ENCODE measurements at regions of chr11 and their contacts with region 1.

Region 1: DNA sequence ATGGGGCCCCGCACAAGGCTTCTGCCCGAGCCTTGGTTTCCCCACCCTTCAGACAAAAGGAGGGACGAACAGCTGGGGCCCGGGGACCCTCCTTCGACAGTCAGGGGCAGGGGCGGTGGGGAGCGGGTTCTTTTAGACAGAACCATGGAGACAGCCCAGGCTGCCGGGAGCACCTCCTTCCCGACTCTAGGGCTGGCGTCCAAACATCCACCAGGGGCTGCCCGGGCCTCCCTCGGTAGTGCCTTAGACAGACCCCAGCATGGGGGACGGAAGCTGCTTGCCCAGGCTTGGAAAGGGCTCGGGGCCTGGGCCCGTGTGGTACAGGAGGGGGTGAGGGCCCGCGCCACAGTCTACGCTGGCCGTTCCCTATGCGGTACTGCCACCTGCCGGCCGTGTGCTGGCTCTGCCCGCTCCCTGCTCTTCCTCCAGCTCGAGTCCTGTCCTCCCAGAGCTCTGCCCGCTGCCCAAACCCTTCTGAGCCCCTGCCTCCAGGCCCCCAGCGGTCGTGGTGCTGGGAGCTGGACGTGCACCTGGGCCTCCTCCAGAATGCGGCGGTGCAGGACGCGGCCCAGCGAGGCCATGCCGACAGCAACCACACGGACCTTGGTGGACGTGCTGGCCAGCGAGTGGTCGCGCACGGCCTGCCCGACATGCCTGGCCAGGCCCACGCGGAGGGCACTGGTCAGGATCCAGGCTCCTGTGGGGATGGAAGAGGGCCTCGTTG is 20.1 kb downstream of the TSSC4 start:
- DNase-seq: peak; percentile 65 to 82
- H3K4me3 ChIP-seq: no peak overlapping the region
- H3K4me3 Mint-ChIP-seq: no peak overlapping the region
- H3K27ac Mint-ChIP-seq: no peak overlapping the region
- H3K4me1 ChIP-seq: peaks cover 4% of the 10 kb centered on the region
- H3K4me1 Mint-ChIP-seq: no peaks in the 10 kb centered on the region
- H3K27me3 ChIP-seq: no peaks in the 10 kb centered on the region
- H3K27me3 Mint-ChIP-seq: no peaks in the 10 kb centered on the region
- CTCF ChIP-seq: peak; percentile 91 to 96

Region 2: DNA sequence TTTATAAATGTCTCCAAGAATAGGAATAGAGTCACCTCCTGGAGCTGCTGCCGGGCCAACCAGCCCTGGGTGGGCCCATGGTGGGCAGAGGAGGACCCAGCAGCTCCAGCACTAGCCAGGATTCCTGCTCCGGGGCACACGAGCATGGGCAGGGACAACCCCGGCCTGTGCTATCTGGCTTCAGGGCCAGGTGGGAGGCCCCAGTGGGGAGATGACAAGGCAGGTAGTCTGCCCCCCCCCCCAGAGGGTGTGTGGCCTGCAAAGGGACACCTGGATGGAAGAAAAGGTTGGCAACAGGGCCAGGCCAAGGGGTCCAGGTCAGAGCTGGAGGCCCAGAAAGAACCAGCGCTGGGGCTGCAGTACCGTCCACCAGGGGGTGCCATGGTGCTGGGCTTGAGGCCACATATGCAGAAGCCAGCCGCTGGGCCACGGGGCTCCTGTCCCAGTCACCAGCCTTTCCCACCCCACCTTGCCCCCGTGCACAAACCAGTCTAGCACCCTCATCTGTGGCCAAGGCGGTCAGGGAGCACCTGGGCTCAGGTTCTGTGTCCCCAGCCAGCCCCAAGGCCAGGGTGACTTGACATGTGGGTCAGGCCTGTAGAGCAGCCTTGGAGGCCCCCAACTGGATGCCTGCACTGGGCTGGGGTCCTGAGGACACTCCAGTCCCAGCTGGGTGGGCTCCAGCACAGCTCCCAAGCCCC is 115.4 kb before region 1 on chr11:
- CTCF ChIA-PET with region 1: interaction called, 128 read pairs
- POLR2A ChIA-PET with region 1: interaction called, 3 read pairs
- intact Hi-C with region 1: loop called (anchors 1 kb)
- DNase-seq: peak; percentile 84 to 89
- H3K4me3 ChIP-seq: no peak overlapping the region
- H3K4me3 Mint-ChIP-seq: no peak overlapping the region
- H3K27ac Mint-ChIP-seq: no peak overlapping the region
- H3K4me1 ChIP-seq: peaks cover 44% of the 10 kb centered on the region
- H3K4me1 Mint-ChIP-seq: no peaks in the 10 kb centered on the region
- H3K27me3 ChIP-seq: no peaks in the 10 kb centered on the region
- H3K27me3 Mint-ChIP-seq: no peaks in the 10 kb centered on the region
- CTCF ChIP-seq: peak; percentile 89 to 95

Region 3: DNA sequence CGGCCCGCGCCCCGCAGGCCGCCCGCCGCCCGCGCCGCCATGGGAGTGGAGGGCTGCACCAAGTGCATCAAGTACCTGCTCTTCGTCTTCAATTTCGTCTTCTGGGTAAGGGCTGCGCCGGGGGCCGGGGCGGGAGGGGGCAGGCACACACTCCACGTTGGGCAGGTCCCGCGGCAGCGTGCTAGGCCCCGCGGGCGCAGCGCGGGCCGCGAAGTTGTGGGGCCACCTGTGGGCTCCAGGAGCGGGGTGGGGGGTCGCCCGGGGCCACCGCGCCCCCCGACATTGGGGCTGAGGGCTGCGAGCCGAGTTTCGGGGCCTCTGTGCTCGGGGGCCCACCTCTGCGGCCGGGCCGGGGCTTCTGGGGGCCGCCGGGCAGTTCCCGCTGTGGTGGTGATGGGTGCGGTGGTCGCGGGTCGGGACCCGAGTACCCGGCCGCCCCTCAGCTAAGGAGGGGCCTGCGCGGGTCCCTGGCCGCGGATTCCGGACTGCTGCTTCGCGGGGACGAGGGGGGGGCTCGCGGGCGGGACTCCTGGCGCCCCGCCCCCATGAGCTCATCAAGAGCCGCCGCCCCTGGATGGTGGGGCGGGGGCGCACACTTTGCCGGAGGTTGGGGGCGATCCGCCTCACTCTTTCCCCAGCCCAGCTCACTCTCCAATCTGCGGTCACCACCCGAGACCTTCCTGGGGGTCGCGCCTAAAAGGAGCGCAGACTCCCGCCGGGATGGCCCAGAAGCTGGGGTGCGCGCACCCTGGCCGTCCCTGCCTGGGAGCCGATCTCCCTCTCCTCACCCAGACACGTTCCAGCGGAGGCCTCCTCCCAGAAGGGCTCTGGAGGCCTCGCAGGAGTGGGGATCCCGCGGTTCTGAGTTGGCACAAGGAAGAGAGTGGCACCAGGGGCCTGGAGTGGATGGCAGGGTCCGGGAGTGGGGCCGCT is 42.9 kb before region 1 on chr11:
- CTCF ChIA-PET with region 1: interaction called, 14 read pairs
- POLR2A ChIA-PET with region 1: no interaction called
- intact Hi-C with region 1: no loop called
- DNase-seq: peak in 1 of 2 experiments; percentile 61
- H3K4me3 ChIP-seq: peak overlapping the region; percentile 72
- H3K4me3 Mint-ChIP-seq: peak overlapping the region; percentile 85
- H3K27ac Mint-ChIP-seq: peak overlapping the region; percentile 69
- H3K4me1 ChIP-seq: peaks cover 20% of the 10 kb centered on the region
- H3K4me1 Mint-ChIP-seq: peaks cover 7% of the 10 kb centered on the region
- H3K27me3 ChIP-seq: no peaks in the 10 kb centered on the region
- H3K27me3 Mint-ChIP-seq: no peaks in the 10 kb centered on the region
- CTCF ChIP-seq: no peak

Measured in Caco-2 (cell line).